ENCODE measurements at regions of chr12 and their contacts with region 1.

Region 1: DNA sequence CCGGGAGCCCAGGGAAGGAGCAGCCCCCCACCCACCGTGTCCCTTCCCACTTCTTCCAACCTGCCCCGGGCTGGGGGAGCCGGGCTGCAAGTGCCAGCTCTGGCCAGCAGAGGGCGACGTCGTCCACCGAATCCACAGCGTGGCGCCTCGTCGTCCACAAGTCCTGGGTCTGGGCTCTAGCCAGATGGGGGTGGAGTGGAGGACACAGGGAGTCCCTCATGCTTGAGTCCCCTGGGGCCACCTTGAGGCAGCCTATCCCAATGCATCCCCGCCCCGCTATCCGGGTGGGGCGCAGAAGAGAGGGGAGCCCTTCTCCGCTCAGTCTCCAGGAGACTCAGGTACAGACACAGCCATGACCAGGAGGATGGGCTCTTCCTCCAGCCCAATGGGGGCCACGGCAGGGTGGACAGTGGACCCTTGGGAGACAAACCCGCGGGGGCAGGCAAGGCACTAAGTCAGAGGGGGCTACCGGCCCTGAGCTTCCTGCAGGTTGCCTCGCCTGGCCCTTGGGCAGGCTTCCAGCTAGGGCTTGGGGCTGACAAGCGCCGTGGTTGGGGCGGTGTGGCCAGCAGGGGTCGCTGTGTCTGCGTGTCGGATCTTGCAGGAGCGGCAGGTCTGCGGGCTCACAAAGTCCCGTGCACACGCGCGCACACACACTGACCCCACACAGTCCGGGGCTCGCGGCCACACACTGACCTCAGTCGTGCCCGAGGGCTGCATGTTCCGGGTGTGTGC is 5.5 kb downstream of the AQP5 start:
- DNase-seq: peak; percentile 94 to 97 (median 96)
- ATAC-seq: peak; percentile 79 to 81
- H3K4me3 ChIP-seq: peak overlapping the region; percentile 4
- H3K27ac ChIP-seq: no peak overlapping the region
- H3K4me1 ChIP-seq: no peaks in the 10 kb centered on the region
- H3K27me3 ChIP-seq: no peaks in the 10 kb centered on the region

Region 2: DNA sequence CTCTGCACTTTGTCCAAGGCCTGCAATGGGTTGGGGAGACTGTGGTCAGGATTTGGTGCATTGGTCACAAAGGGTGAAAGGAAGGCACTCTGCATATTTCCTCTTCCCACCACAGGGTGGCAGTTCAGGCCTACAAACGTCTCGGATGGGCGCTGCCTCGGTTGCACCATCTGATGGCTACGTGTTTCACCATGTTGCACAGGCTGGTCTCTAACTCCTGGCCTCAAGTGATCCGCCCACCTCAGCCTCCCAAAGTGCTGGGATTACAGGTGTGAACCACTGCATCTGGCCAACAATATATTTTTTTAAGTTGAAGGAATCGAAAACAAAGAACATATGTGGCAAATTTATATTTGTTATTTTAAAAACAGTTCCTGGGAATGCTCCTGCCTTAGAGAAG is 190.8 kb before region 1 on chr12:
- intact Hi-C with region 1: loop called in 1 of 4 experiments (anchors 10 kb)
- DNase-seq: peak; percentile 75 to 89 (median 84)
- ATAC-seq: peak; percentile 90
- H3K4me3 ChIP-seq: no peak overlapping the region
- H3K27ac ChIP-seq: no peak overlapping the region
- H3K4me1 ChIP-seq: no peaks in the 10 kb centered on the region
- H3K27me3 ChIP-seq: no peaks in the 10 kb centered on the region

Region 3: GRCh38 chr12:49866859-49867579 is 100.2 kb before region 1 on chr12:
- intact Hi-C with region 1: loop called in 1 of 4 experiments (anchors 5 kb)
- DNase-seq: peak; percentile 69 to 90 (median 87)
- ATAC-seq: peak in 1 of 2 donors; percentile 7
- H3K4me3 ChIP-seq: no peak overlapping the region
- H3K27ac ChIP-seq: no peak overlapping the region
- H3K4me1 ChIP-seq: peaks cover 14% of the 10 kb centered on the region
- H3K27me3 ChIP-seq: no peaks in the 10 kb centered on the region

Region 4: GRCh38 chr12:50055831-50056638 is 88.8 kb after region 1 on chr12:
- intact Hi-C with region 1: loop called (anchors 2 to 5 kb)
- DNase-seq: peak in 1 of 3 donors; percentile 74
- ATAC-seq: peak; percentile 30 to 54
- H3K4me3 ChIP-seq: no peak overlapping the region
- H3K27ac ChIP-seq: no peak overlapping the region
- H3K4me1 ChIP-seq: no peaks in the 10 kb centered on the region
- H3K27me3 ChIP-seq: no peaks in the 10 kb centered on the region

Region 5: GRCh38 chr12:50066433-50066832 is 99.2 kb after region 1 on chr12:
- intact Hi-C with region 1: loop called in 2 of 4 experiments (anchors 5 kb)
- DNase-seq: no peak
- ATAC-seq: peak in 1 of 2 donors; percentile 25
- H3K4me3 ChIP-seq: no peak overlapping the region
- H3K27ac ChIP-seq: no peak overlapping the region
- H3K4me1 ChIP-seq: peaks cover 3% of the 10 kb centered on the region
- H3K27me3 ChIP-seq: no peaks in the 10 kb centered on the region

Region 6: GRCh38 chr12:50074936-50075807 is 108.0 kb after region 1 on chr12:
- intact Hi-C with region 1: loop called in 1 of 4 experiments (anchors 5 kb)
- DNase-seq: peak; percentile 85 to 93 (median 93)
- ATAC-seq: peak; percentile 83 to 85
- H3K4me3 ChIP-seq: no peak overlapping the region
- H3K27ac ChIP-seq: no peak overlapping the region
- H3K4me1 ChIP-seq: no peaks in the 10 kb centered on the region
- H3K27me3 ChIP-seq: no peaks in the 10 kb centered on the region

Region 7: DNA sequence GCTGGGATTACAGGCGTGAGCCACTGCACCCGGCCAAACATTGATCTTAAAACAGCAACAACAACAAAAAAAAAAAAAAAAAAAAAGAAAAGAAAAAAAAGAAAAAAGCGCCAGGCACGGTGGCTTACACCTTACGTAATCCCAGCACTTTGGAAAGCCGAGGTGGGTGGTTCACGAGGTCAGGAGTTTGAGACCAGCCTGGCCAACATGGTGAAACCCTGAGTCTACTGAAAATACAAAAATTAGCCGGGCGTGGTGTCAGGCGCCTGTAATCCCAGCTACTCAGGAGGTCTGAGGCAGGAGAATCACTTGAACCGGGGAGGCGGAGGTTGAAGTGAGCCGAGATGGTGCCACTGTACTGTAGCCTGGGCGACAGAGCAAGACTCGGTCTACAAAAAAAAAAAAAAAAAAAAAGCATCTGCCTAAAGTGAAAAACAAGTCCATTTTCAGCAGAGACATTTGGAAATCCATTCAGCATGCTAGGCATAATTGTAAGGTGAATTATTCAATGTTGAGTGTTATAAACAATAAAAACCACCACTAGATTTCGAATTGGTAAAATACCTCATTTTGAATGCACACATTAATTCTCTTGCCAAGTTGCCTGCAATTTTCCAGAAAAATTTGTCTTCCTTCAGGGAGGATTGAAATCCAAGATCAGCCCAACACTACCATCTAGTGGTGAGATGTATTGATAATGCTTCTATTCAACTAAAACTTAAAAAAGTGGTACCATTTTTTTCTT is 207.9 kb after region 1 on chr12:
- intact Hi-C with region 1: loop called in 2 of 4 experiments (anchors 10 kb)
- DNase-seq: no peak
- ATAC-seq: no peak
- H3K4me3 ChIP-seq: no peak overlapping the region
- H3K27ac ChIP-seq: no peak overlapping the region
- H3K4me1 ChIP-seq: no peaks in the 10 kb centered on the region
- H3K27me3 ChIP-seq: no peaks in the 10 kb centered on the region